Activated CD4-positive, alpha-beta T cell treated with anti-CD3 and anti-CD28 coated beads for 36 hours (primary cell): ENCODE measurements at regions of chr1 and their contacts with region 1.

Region 1: GRCh38 chr1:28248283-28249012 is 10.9 kb upstream of the SESN2 start:
- DNase-seq: peak; percentile 92
- ATAC-seq: peak; percentile 31
- H3K4me3 Mint-ChIP-seq: peak overlapping the region; percentile 82
- H3K27ac Mint-ChIP-seq: peak overlapping the region; percentile 83
- H3K4me1 Mint-ChIP-seq: peaks cover 54% of the 10 kb centered on the region
- H3K27me3 Mint-ChIP-seq: no peaks in the 10 kb centered on the region

Region 2: DNA sequence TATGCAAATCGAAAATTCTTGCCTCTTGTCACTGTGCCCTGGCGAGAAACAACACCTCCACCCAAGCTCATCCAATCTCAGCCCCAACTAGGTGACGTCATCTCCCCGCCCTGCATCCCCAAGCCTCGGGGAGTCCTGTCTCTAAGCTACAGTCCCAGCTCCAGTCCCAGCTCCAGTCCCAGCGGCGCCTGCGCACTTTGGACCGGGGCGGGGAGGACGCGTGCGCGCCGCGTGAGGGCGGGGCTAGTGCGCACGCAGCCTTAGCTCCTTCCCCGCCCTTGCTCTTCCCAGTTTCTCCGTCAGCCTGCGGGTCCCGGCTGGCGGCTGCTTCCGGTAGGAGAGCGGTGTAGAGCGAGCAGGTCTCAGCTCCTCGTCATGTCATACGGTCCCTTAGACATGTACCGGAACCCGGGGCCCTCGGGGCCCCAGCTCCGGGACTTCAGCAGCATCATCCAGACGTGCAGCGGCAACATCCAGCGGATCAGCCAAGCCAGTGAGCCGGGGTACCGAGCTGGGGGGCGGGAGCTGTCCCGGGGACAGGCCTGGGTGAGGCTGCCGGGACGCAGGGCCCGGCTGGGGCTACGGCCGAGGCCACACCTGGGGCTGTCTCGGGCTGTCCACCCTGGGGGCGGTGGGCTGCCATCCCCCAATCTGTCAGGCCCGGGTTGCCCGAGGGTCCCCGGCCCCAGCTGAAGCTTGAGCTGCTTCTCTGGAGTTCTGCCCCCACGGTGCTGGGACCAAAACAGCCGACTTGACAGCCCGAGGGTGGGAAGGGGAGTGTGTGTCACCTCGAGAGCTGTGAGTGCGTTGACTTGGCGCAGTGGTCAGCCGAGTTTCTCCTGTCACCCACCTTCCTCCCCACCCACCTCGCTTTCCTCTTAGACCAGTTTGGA is 475.3 kb before region 1 on chr1 and contains the start of gene STX12:
- CTCF ChIA-PET with region 1: no interaction called
- POLR2A ChIA-PET with region 1: no interaction called
- intact Hi-C with region 1: loop called in 1 of 2 experiments (anchors 2 kb)
- DNase-seq: peak; percentile 100
- ATAC-seq: peak; percentile 97
- H3K4me3 Mint-ChIP-seq: peak within 1 kb of the TSS; percentile 98
- H3K27ac Mint-ChIP-seq: peak within 1 kb of the TSS; percentile 99
- H3K4me1 Mint-ChIP-seq: peaks cover 31% of the 10 kb centered on the region
- H3K27me3 Mint-ChIP-seq: no peaks in the 10 kb centered on the region
- total RNA-seq, gene STX12: 26.8 to 37.4 TPM

Region 3: GRCh38 chr1:28235755-28236655 is 12.4 kb before region 1 on chr1 and contains the start of gene ATP5IF1:
- CTCF ChIA-PET with region 1: interaction called, 24 read pairs
- POLR2A ChIA-PET with region 1: interaction called, 9 read pairs
- intact Hi-C with region 1: loop called (anchors 1 kb)
- DNase-seq: peak; percentile 97
- ATAC-seq: peak; percentile 97
- H3K4me3 Mint-ChIP-seq: no peak within 1 kb of the TSS
- H3K27ac Mint-ChIP-seq: no peak within 1 kb of the TSS
- H3K4me1 Mint-ChIP-seq: peaks cover 15% of the 10 kb centered on the region
- H3K27me3 Mint-ChIP-seq: no peaks in the 10 kb centered on the region
- total RNA-seq, gene ATP5IF1: 192 to 195 TPM

Region 4: GRCh38 chr1:28329395-28330153 is 81.1 kb after region 1 on chr1:
- CTCF ChIA-PET with region 1: interaction called, 27 read pairs
- POLR2A ChIA-PET with region 1: interaction called, 17 read pairs
- intact Hi-C with region 1: loop called (anchors 1 kb)
- DNase-seq: peak; percentile 61
- ATAC-seq: peak; percentile 19
- H3K4me3 Mint-ChIP-seq: peak overlapping the region; percentile 96
- H3K27ac Mint-ChIP-seq: peak overlapping the region; percentile 97
- H3K4me1 Mint-ChIP-seq: peaks cover 39% of the 10 kb centered on the region
- H3K27me3 Mint-ChIP-seq: no peaks in the 10 kb centered on the region

Region 5: GRCh38 chr1:28552758-28553663 is 304.6 kb after region 1 on chr1 and contains the start of gene TRNAU1AP:
- CTCF ChIA-PET with region 1: no interaction called
- POLR2A ChIA-PET with region 1: no interaction called
- intact Hi-C with region 1: loop called (anchors 1 to 5 kb)
- DNase-seq: peak; percentile 99
- ATAC-seq: peak; percentile 94
- H3K4me3 Mint-ChIP-seq: peak within 1 kb of the TSS; percentile 92
- H3K27ac Mint-ChIP-seq: peak within 1 kb of the TSS; percentile 95
- H3K4me1 Mint-ChIP-seq: peaks cover 24% of the 10 kb centered on the region
- H3K27me3 Mint-ChIP-seq: no peaks in the 10 kb centered on the region
- total RNA-seq, gene TRNAU1AP: 50.7 to 60.2 TPM

Region 6: GRCh38 chr1:28736450-28737306 is 488.2 kb after region 1 on chr1 and contains the start of gene YTHDF2:
- CTCF ChIA-PET with region 1: no interaction called
- POLR2A ChIA-PET with region 1: no interaction called
- intact Hi-C with region 1: loop called in 1 of 2 experiments (anchors 5 kb)
- DNase-seq: peak; percentile 99
- ATAC-seq: peak; percentile 90
- H3K4me3 Mint-ChIP-seq: peak within 1 kb of the TSS; percentile 95
- H3K27ac Mint-ChIP-seq: peak within 1 kb of the TSS; percentile 90
- H3K4me1 Mint-ChIP-seq: peaks cover 31% of the 10 kb centered on the region
- H3K27me3 Mint-ChIP-seq: no peaks in the 10 kb centered on the region
- total RNA-seq, gene YTHDF2: 74.8 to 98.7 TPM